ENCODE measurements at regions of chr4 and their contacts with region 1.

Region 1: GRCh38 chr4:119628308-119629141 is at the start of gene PDE5A:
- DNase-seq: peak; percentile 48 to 70
- ATAC-seq: peak; percentile 85 to 91
- H3K4me3 ChIP-seq: peak within 1 kb of the TSS; percentile 83
- H3K27ac ChIP-seq: peak within 1 kb of the TSS; percentile 48 to 76; a peak in 5 of 6 replicates
- H3K4me1 ChIP-seq: no peaks in the 10 kb centered on the region
- CTCF ChIP-seq: peak; percentile 64
- EP300 ChIP-seq: no peak
- POLR2A ChIP-seq: no peak
- RAD21 ChIP-seq: peak; percentile 67 to 81
- polyA plus RNA-seq, gene PDE5A: 0.79 and 1.0 TPM in 2 replicates

Region 2: DNA sequence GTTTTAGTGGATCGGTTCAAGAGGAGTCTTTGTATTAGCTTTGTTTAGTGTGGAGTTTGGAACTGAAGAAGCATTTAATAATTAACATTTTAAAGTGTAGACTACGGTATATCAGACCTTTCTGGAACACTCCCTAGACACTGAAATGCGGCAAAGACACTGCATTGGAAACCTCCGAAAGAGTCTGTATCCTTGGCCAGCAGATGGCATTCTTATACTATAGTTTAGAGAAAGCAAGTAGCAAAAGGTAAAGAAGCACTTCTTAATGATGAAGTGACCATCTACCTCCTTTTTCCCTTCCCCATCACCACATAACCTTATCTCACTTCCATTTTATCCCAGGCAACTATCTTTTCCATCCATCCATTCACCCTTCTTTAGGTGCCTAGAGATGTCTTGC is 314.2 kb before region 1 on chr4:
- CTCF ChIA-PET with region 1: interaction called, 12 read pairs
- POLR2A ChIA-PET with region 1: no interaction called
- DNase-seq: peak in 1 of 2 experiments; percentile 39
- ATAC-seq: peak; percentile 85 to 89; a peak in 5 of 6 replicates
- H3K4me3 ChIP-seq: no peak overlapping the region
- H3K27ac ChIP-seq: no peak overlapping the region
- H3K4me1 ChIP-seq: no peaks in the 10 kb centered on the region
- CTCF ChIP-seq: peak; percentile 64
- EP300 ChIP-seq: no peak
- POLR2A ChIP-seq: no peak
- RAD21 ChIP-seq: peak; percentile 74 to 75

Region 3: GRCh38 chr4:119559044-119559647 is 69.4 kb before region 1 on chr4:
- CTCF ChIA-PET with region 1: interaction called, 19 read pairs
- POLR2A ChIA-PET with region 1: no interaction called
- DNase-seq: peak; percentile 4 to 37
- ATAC-seq: 0 out of 6 replicates have a peak, but pooled peaks of 1 of the 2 experiments have one; percentile 35
- H3K4me3 ChIP-seq: no peak overlapping the region
- H3K27ac ChIP-seq: no peak overlapping the region
- H3K4me1 ChIP-seq: no peaks in the 10 kb centered on the region
- CTCF ChIP-seq: peak; percentile 52
- EP300 ChIP-seq: no peak
- POLR2A ChIP-seq: no peak
- RAD21 ChIP-seq: peak; percentile 54 to 56

Region 4: GRCh38 chr4:119643306-119644042 is 14.9 kb after region 1 on chr4:
- CTCF ChIA-PET with region 1: interaction called, 15 read pairs
- POLR2A ChIA-PET with region 1: no interaction called
- DNase-seq: no peak
- ATAC-seq: no peak
- H3K4me3 ChIP-seq: no peak overlapping the region
- H3K27ac ChIP-seq: no peak overlapping the region
- H3K4me1 ChIP-seq: no peaks in the 10 kb centered on the region
- CTCF ChIP-seq: no peak
- EP300 ChIP-seq: no peak
- POLR2A ChIP-seq: no peak
- RAD21 ChIP-seq: no peak

Region 5: DNA sequence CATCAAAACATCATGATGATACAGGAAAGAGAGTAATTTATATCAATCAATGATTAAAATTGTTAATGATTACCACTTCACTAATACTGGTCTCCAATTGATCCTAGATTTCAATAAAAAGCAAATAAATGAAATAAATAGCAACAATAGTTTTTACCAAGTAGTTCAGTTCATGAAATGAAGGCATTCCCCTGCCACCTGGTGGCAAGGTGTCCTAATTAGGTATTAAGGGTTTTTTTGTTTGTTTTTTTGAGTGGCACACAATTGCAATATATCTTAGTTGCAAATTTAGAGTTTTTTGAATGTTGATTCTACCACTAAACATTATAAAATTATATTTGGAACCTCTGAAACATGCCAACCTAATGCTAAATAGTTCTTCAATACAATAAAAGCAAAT is 157.4 kb after region 1 on chr4:
- CTCF ChIA-PET with region 1: interaction called, 16 read pairs
- POLR2A ChIA-PET with region 1: interaction called, 3 read pairs
- DNase-seq: peak in 1 of 2 experiments; percentile 25
- ATAC-seq: no peak
- H3K4me3 ChIP-seq: no peak overlapping the region
- H3K27ac ChIP-seq: no peak overlapping the region
- H3K4me1 ChIP-seq: no peaks in the 10 kb centered on the region
- CTCF ChIP-seq: peak; percentile 28
- EP300 ChIP-seq: no peak
- POLR2A ChIP-seq: no peak
- RAD21 ChIP-seq: peak; percentile 42 to 49; a peak in 4 of 5 replicates

Region 6: DNA sequence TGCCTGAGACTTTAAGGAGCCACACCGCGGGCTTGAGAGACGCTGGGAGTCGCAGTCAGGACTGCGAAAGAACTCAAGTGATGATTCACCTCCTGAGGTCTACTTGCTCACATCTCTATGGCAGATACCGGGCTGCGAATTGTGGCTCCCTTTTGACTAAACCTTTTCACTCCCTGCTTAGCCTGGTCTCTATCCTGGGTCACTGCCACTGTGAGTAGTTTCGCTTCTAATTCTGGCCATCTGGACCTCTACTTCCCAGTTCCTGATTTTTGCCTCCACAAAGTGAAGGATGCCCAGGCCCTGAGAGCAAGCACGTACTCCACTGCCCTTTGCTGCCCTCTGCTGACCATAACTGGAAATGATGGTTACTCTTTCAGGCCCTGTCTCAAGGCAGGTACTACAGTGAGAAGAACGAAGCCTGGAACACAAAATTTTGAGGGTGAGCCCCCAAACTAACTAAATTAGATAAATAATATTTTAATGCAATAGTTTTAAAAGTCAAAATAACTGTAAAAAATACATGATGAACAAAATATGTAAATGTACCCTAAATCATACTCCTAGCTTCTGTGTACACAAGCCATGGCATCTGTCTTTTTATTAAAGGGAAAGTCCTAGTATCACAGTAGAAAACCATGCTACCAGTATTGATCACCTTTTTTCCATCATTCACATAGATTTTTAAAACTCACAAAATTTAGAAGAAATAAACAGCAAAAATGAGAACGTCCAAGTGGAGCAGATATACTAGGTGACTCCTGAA is 421.4 kb after region 1 on chr4:
- CTCF ChIA-PET with region 1: interaction called, 19 read pairs
- POLR2A ChIA-PET with region 1: no interaction called
- DNase-seq: peak; percentile 23 to 66
- ATAC-seq: peak; percentile 100
- H3K4me3 ChIP-seq: no peak overlapping the region
- H3K27ac ChIP-seq: no peak overlapping the region
- H3K4me1 ChIP-seq: no peaks in the 10 kb centered on the region
- CTCF ChIP-seq: peak; percentile 72
- EP300 ChIP-seq: no peak
- POLR2A ChIP-seq: no peak
- RAD21 ChIP-seq: peak; percentile 80

Region 7: GRCh38 chr4:120056246-120056645 is 427.7 kb after region 1 on chr4:
- CTCF ChIA-PET with region 1: interaction called, 24 read pairs
- POLR2A ChIA-PET with region 1: no interaction called
- DNase-seq: no peak
- ATAC-seq: peak in 1 of 2 experiments; percentile 43; a peak in 1 of 6 replicates
- H3K4me3 ChIP-seq: no peak overlapping the region
- H3K27ac ChIP-seq: no peak overlapping the region
- H3K4me1 ChIP-seq: no peaks in the 10 kb centered on the region
- CTCF ChIP-seq: peak; percentile 28; the same call in 1 of the 3 replicates
- EP300 ChIP-seq: no peak
- POLR2A ChIP-seq: no peak
- RAD21 ChIP-seq: no peak; a peak in 1 of 5 replicates

Measured in A549 (cell line).